ENCODE measurements at regions of chr19 and their contacts with region 1.

Region 1: DNA sequence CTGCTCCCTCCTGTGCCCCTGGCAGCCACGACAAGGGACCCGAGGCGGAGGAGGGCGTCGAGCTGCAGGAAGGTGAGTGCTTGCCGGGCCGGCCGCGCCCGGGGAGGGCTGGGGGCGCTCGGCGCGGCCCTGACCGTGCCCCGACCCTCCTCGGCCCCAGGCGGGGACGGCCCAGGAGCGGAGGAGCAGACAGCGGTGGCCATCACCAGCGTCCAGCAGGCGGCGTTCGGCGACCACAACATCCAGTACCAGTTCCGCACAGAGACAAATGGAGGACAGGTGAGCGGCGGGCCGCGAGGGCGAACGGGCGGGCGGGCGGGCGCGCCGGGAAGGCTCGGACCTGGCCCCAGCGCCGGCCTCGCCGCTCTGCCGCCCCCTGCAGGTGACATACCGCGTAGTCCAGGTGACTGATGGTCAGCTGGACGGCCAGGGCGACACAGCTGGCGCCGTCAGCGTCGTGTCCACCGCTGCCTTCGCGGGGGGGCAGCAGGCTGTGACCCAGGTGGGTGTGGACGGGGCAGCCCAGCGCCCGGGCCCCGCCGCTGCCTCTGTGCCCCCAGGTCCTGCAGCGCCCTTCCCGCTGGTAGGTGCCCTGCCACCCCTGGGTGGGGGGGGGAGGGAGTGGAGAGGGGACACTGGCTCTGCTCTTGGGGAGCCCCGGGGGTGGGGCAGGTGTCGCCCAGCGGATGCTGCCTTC is 807 bp downstream of the USF2 start:
- DNase-seq: peak; percentile 72 to 86
- ATAC-seq: peak; percentile 46 to 56
- H3K4me3 ChIP-seq: peak overlapping the region; percentile 65 to 98 (median 72)
- H3K27ac ChIP-seq: peak overlapping the region; percentile 95 to 100 (median 98)
- H3K4me1 ChIP-seq: peaks cover 17 to 31% of the 10 kb centered on the region in 2 donors
- H3K27me3 ChIP-seq: no peaks in the 10 kb centered on the region
- CTCF ChIP-seq: peak; percentile 41 to 95 (median 74)
- POLR2A ChIP-seq: peak; percentile 21 to 27

Region 2: GRCh38 chr19:34999498-35000341 is 269.8 kb before region 1 on chr19 and contains the start of gene GRAMD1A:
- in situ Hi-C with region 1: loop called in 1 of 4 experiments (anchors 25 kb)
- intact Hi-C with region 1: no loop called
- DNase-seq: peak; percentile 76 to 86
- ATAC-seq: peak; percentile 83
- H3K4me3 ChIP-seq: peak within 1 kb of the TSS; percentile 67 to 84 (median 73)
- H3K27ac ChIP-seq: peak within 1 kb of the TSS; percentile 91 to 99 (median 97)
- H3K4me1 ChIP-seq: peaks cover 29 to 38% of the 10 kb centered on the region in 2 donors
- H3K27me3 ChIP-seq: no peaks in the 10 kb centered on the region
- CTCF ChIP-seq: no peak
- POLR2A ChIP-seq: peak; percentile 6 to 79
- total RNA-seq, gene GRAMD1A: 38.8 to 45.1 (median 43.7) TPM

Region 3: GRCh38 chr19:35066691-35067563 is 202.6 kb before region 1 on chr19:
- in situ Hi-C with region 1: no loop called
- intact Hi-C with region 1: loop called (anchors 5 kb)
- DNase-seq: peak; percentile 72 to 84
- ATAC-seq: peak; percentile 59 to 79
- H3K4me3 ChIP-seq: no peak overlapping the region
- H3K27ac ChIP-seq: peak overlapping the region; percentile 52 to 80 (median 60)
- H3K4me1 ChIP-seq: peaks cover 22 to 34% of the 10 kb centered on the region in 2 donors
- H3K27me3 ChIP-seq: no peaks in the 10 kb centered on the region
- CTCF ChIP-seq: peak; percentile 89 to 96 (median 94)
- POLR2A ChIP-seq: peak in 1 of 2 donors; percentile 36

Region 4: DNA sequence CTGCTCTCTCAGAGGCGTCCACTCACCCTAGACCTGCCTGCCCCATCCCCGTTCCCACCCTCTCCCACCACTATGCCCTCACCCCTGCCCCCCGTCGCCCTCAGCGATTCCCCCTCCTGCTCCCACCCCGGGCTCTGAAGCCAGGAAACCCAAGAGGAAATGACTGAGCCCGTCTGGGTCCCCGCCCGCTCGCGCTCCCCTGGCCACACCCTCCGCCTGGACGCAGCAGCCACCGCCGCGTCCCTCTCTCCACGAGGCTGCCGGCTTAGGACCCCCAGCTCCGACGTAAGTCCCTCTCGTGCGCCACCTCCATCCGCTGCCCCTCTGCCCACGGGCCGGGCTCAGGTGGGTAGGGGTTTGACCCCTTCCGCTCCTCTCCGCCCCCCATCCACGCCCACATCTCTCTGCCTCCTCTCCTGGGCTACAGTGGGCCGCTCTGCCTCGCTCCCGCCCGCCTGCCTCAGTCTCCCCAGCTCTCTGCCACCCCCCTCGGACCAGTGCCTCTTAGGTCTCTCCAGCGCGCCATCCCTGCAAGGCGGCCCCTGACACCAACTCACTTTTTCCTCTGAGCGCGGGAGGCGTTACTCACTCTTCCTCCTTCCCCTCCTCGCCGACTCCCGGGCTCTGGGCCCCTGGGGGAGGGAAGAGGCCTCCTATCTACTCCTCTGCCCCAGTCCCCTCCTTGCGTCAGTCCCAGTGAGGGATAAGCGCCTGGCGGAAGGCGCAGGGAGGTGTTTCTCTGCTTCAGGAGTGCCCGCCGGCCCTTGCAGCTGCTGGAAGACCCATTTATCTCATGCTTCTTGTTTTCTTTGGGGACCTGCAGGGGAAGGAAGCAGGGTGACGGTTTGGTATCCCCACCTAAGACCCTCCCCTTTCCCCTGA is 114.8 kb before region 1 on chr19 and contains the start of gene FXYD5:
- in situ Hi-C with region 1: loop called in 2 of 4 experiments (anchors 10 kb)
- intact Hi-C with region 1: no loop called
- DNase-seq: peak in 1 of 2 donors; percentile 32
- ATAC-seq: peak in 1 of 2 donors; percentile 59
- H3K4me3 ChIP-seq: peak within 1 kb of the TSS; percentile 53 to 69 (median 56)
- H3K27ac ChIP-seq: peak within 1 kb of the TSS; percentile 68 to 77 (median 74)
- H3K4me1 ChIP-seq: peaks cover 0 to 10% of the 10 kb centered on the region in 2 donors
- H3K27me3 ChIP-seq: peaks cover 30 to 53% (median 39%) of the 10 kb centered on the region in 3 donors
- CTCF ChIP-seq: peak in 1 of 5 experiments; percentile 13
- POLR2A ChIP-seq: peak; percentile 12 to 33
- total RNA-seq, gene FXYD5: 5.2 to 23.3 (median 14.3) TPM

Region 5: GRCh38 chr19:35495107-35496064 is 225.8 kb after region 1 on chr19:
- in situ Hi-C with region 1: no loop called
- intact Hi-C with region 1: loop called (anchors 1 kb)
- DNase-seq: peak; percentile 11 to 24
- ATAC-seq: peak; percentile 73 to 82
- H3K4me3 ChIP-seq: peak overlapping the region in 1 of 4 donors; percentile 7
- H3K27ac ChIP-seq: no peak overlapping the region
- H3K4me1 ChIP-seq: peaks cover 0 to 3% of the 10 kb centered on the region in 2 donors
- H3K27me3 ChIP-seq: peaks cover 0 to 5% (median 0%) of the 10 kb centered on the region in 3 donors
- CTCF ChIP-seq: peak; percentile 75 to 95 (median 83)
- POLR2A ChIP-seq: no peak

Region 6: DNA sequence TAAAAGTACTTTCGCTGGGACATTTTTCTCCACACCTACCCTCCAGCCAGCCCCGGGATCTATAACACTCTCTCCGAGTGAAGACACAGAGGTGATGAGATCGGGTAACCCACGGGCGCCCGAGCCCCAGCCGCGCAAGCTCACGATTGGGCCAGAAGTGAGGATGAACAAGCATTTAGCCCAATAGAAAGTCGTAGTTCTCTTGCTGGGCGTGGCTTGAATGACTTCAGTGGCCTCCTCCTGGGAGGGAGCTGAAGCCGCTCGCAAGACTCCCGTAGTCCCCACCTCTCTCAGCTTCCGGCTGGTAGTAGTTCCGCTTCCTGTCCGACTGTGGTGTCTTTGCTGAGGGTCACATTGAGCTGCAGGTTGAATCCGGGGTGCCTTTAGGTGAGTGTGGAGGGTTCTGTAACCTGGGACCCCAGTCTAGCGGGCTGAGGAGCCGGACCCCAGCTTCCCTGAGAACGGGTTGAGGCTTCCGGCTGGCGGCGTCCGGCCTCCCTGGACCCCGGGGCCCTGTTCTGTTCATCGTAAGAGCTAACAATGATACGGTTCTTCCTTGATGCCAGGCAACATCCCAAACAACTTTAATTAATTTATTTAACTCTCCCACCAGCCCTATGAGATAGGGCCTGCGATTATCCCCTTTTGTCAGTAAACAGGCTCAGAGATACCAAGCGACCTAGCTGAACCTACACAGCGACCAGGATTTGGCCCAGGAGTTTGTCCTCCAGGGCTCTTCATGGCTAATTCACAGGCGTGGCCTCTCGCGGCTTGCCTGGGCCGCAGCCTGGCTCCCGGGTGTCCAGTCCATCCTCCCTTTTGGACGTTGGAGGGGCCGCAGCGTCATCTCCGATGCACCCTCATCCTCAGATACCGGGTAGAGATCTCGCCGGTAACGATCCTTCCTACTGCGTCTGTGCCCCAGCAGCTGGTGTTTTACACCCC is 378.7 kb after region 1 on chr19 and contains the start of gene COX6B1:
- in situ Hi-C with region 1: no loop called
- intact Hi-C with region 1: loop called (anchors 5 kb)
- DNase-seq: peak; percentile 97 to 98
- ATAC-seq: peak; percentile 94
- H3K4me3 ChIP-seq: peak within 1 kb of the TSS; percentile 74 to 98 (median 90)
- H3K27ac ChIP-seq: peak within 1 kb of the TSS; percentile 92 to 98 (median 94)
- H3K4me1 ChIP-seq: peaks cover 23 to 32% of the 10 kb centered on the region in 2 donors
- H3K27me3 ChIP-seq: no peaks in the 10 kb centered on the region
- CTCF ChIP-seq: no peak
- POLR2A ChIP-seq: peak; percentile 76 to 85
- total RNA-seq, gene COX6B1: 899 to 1,245 (median 976) TPM

Measured in gastrocnemius medialis (tissue), 4 donors.